Activated CD4-positive, alpha-beta T cell treated with anti-CD3 and anti-CD28 coated beads for 36 hours (primary cell): ENCODE measurements at regions of chr6 and their contacts with region 1.

Region 1: GRCh38 chr6:158644231-158645063 is at the start of gene DYNLT1:
- DNase-seq: peak; percentile 94
- ATAC-seq: peak; percentile 43
- H3K4me3 Mint-ChIP-seq: peak within 1 kb of the TSS; percentile 99
- H3K27ac Mint-ChIP-seq: peak within 1 kb of the TSS; percentile 99
- H3K4me1 Mint-ChIP-seq: peaks cover 77% of the 10 kb centered on the region
- H3K27me3 Mint-ChIP-seq: no peaks in the 10 kb centered on the region
- total RNA-seq, gene DYNLT1: 116 to 118 TPM

Region 2: DNA sequence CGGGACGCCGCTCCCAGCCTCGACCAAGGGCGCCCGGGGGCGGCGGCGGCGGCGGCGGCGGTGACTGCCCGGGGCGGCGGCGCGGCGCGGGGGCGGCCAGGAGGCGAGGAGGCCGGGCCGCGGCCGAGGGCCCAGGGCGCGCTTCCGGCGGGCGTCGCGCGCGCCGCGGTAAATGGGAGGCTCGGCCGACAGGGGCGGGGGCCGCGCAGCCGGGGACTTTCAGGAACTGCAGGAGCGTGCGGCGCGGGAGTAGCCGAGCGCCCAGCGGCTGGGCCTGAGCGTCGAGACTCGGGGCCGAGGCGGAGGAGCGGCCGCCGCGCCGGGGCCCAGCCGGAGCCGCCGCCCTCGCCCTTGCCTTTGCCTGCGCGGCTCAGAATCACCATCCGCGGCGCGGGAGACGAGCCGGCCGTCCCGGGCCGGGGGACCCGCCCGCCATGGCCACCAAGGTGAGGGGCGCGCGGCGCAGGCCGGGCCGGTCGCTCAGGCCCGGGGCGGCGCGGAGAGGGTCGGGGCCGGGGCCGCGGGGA is 821.4 kb before region 1 on chr6 and contains the start of gene SNX9:
- CTCF ChIA-PET with region 1: no interaction called
- POLR2A ChIA-PET with region 1: no interaction called
- intact Hi-C with region 1: loop called in 1 of 2 experiments (anchors 5 kb)
- DNase-seq: peak; percentile 84
- ATAC-seq: peak; percentile 59
- H3K4me3 Mint-ChIP-seq: peak within 1 kb of the TSS; percentile 92
- H3K27ac Mint-ChIP-seq: peak within 1 kb of the TSS; percentile 99
- H3K4me1 Mint-ChIP-seq: peaks cover 48% of the 10 kb centered on the region
- H3K27me3 Mint-ChIP-seq: peaks cover 11% of the 10 kb centered on the region
- total RNA-seq, gene SNX9: 39.4 to 43.3 TPM

Region 3: DNA sequence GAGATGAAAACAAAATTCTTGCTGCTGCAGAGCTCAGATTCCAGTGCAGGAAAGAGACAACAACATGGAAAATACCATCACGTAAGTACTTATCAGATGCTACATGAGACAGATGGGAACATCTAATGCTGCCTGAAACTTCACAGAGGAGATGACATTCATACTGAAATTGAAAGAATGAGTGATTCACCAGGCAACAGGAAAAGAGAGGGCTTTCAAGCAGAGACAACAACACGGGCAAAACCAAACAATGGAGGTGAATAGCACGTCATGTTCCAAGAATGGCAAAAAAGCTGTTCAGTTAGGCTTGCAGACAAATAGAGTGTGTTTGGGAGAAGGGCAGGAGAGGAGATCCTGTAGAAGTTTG is 437.0 kb before region 1 on chr6:
- CTCF ChIA-PET with region 1: no interaction called
- POLR2A ChIA-PET with region 1: interaction called, 4 read pairs
- intact Hi-C with region 1: loop called (anchors 1 to 2 kb)
- DNase-seq: peak; percentile 57
- ATAC-seq: peak; percentile 95
- H3K4me3 Mint-ChIP-seq: peak overlapping the region; percentile 15
- H3K27ac Mint-ChIP-seq: peak overlapping the region; percentile 90
- H3K4me1 Mint-ChIP-seq: peaks cover 32% of the 10 kb centered on the region
- H3K27me3 Mint-ChIP-seq: peaks cover 5% of the 10 kb centered on the region

Region 4: DNA sequence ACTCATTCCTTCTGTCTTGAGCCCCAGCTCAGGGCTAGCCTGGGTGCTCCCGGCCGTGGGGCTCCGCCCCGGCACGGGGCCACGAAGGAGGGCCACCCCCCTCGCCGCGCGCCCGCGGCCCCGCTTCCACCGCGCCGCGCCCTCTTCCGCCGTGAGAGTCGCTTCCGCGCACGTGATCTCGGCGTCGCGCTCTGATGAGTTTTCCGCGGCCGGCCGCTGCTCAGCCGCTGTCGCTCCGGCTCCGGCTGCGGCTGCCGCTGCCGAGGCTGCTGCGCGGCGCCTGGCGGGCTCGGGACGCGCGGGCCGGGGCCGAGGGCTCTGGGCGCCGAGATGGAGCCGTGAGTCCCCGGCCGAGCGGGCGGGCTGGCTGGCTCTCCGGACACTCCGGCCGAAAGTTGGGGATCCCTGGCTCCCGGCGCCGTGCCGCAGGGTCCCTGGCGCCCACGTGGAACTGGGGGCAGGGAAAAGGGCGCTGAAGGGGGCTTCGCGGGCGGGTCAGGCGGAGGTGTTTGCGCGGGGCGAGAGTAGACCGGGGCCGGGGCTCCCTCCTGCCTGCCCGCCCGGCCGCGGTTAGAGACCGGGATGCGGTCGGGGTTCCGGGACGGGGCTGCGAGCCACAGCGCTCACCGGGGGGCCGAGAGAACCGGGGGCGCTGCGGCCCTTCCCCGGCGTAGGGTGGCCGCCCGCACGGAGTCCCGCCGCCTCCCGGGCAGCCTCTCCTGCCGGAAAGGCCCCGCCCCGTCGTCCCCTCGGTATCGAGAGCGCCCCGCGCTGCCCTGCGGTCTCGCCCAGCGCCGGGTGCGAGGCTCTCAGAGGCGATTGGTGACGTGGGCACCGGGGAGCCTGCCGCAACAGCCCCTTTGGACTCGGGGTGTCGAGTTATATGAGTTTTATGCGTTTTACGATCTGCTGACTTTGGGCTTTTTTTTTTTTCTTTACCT is 84.3 kb before region 1 on chr6 and contains the start of gene TMEM181:
- CTCF ChIA-PET with region 1: no interaction called
- POLR2A ChIA-PET with region 1: no interaction called
- intact Hi-C with region 1: loop called in 1 of 2 experiments (anchors 1 kb)
- DNase-seq: peak; percentile 93
- ATAC-seq: peak; percentile 90
- H3K4me3 Mint-ChIP-seq: peak within 1 kb of the TSS; percentile 96
- H3K27ac Mint-ChIP-seq: peak within 1 kb of the TSS; percentile 92
- H3K4me1 Mint-ChIP-seq: peaks cover 35% of the 10 kb centered on the region
- H3K27me3 Mint-ChIP-seq: no peaks in the 10 kb centered on the region
- total RNA-seq, gene TMEM181: 8.3 to 9.9 TPM

Region 5: GRCh38 chr6:158803733-158804143 is 159.3 kb after region 1 on chr6:
- CTCF ChIA-PET with region 1: no interaction called
- POLR2A ChIA-PET with region 1: no interaction called
- intact Hi-C with region 1: no loop called
- DNase-seq: peak; percentile 40
- ATAC-seq: peak; percentile 68
- H3K4me3 Mint-ChIP-seq: peak overlapping the region; percentile 55
- H3K27ac Mint-ChIP-seq: peak overlapping the region; percentile 63
- H3K4me1 Mint-ChIP-seq: peaks cover 93% of the 10 kb centered on the region
- H3K27me3 Mint-ChIP-seq: no peaks in the 10 kb centered on the region

Region 6: DNA sequence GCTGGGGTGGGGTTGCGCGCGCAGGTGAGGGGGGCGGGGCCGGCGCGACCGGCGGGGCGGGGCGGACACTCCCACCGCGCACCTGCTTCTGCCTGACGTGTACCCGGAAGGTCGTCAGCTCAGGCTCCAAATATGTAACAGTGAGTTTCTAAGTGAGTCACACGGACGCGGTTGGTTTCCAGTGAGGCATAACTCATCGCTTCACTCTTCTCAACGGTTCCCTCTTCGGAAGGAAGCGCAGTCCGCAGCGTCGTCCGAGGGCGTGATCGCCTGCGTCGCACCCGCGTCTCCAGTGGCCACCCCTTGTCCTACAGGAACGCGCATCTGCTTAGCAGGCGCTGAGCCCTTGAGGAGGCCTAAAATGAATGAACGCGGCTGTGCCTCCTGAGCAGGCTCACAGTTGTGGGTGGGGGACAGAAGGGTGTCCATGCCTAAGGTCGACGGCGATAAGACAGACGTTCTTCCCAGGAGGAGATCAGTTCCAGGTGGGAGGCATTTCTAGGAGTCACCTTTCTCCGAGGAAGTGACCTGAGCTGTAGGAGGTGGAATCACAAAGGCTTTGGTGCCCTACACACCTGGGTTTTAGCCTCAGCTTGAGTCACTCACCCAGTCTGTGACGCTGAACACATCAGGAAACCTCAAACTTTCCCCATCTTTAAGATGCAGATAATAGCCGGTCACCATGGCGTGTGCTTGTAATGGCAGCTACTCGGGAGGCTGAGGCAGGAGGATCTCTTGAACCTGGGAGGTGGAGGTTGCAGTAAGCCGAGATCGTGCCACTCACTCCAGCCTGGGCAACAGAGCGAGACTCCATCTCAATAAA is 225.6 kb after region 1 on chr6:
- CTCF ChIA-PET with region 1: no interaction called
- POLR2A ChIA-PET with region 1: interaction called, 13 read pairs
- intact Hi-C with region 1: loop called in 1 of 2 experiments (anchors 2 kb)
- DNase-seq: peak; percentile 98
- ATAC-seq: peak; percentile 90
- H3K4me3 Mint-ChIP-seq: peak overlapping the region; percentile 75
- H3K27ac Mint-ChIP-seq: peak overlapping the region; percentile 95
- H3K4me1 Mint-ChIP-seq: peaks cover 37% of the 10 kb centered on the region
- H3K27me3 Mint-ChIP-seq: no peaks in the 10 kb centered on the region

Region 7: GRCh38 chr6:159056003-159056402 is 411.6 kb after region 1 on chr6:
- CTCF ChIA-PET with region 1: no interaction called
- POLR2A ChIA-PET with region 1: interaction called, 5 read pairs
- intact Hi-C with region 1: loop called in 1 of 2 experiments (anchors 5 kb)
- DNase-seq: no peak
- ATAC-seq: no peak
- H3K4me3 Mint-ChIP-seq: peak overlapping the region; percentile 13
- H3K27ac Mint-ChIP-seq: peak overlapping the region; percentile 89
- H3K4me1 Mint-ChIP-seq: peaks cover 67% of the 10 kb centered on the region
- H3K27me3 Mint-ChIP-seq: no peaks in the 10 kb centered on the region